ENCODE measurements at regions of chr2 and their contacts with region 1.

Region 1: DNA sequence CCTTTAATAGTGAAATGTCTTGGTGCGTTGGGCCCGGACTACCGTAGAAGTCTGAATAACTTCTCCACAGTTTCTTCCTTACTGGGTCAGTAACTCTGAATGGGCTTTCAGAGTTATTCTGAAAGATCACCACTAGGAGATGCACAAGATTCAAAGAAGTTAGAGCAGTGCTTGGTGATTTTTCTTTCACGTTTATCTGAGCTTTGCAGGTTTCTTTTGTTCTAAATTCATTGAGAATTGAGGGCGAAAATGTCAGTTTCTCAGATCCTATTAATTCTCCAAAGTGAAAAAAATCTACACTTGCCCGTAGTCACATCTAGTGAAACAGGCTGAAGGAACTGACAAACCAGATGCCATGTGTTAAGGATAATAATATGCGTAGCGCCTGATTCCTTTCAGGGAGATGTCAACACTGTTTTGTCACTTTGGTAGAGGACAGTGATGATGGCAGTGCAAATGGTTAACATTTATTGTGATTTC is 70.1 kb downstream of the QPCT start:
- DNase-seq: peak; percentile 5 to 65
- H3K4me3 ChIP-seq: no peak overlapping the region
- H3K27ac ChIP-seq: no peak overlapping the region
- H3K4me1 ChIP-seq: no peaks in the 10 kb centered on the region
- H3K27me3 ChIP-seq: no peaks in the 10 kb centered on the region
- CTCF ChIP-seq: peak; percentile 94

Region 2: GRCh38 chr2:37472959-37473358 is 58.4 kb after region 1 on chr2:
- CTCF ChIA-PET with region 1: no interaction called
- POLR2A ChIA-PET with region 1: no interaction called
- intact Hi-C with region 1: no loop called
- DNase-seq: peak; percentile 52 to 83
- H3K4me3 ChIP-seq: no peak overlapping the region
- H3K27ac ChIP-seq: peak overlapping the region; percentile 65
- H3K4me1 ChIP-seq: peaks cover 25% of the 10 kb centered on the region
- H3K27me3 ChIP-seq: no peaks in the 10 kb centered on the region
- CTCF ChIP-seq: no peak

Region 3: GRCh38 chr2:37776487-37776886 is 362.0 kb after region 1 on chr2:
- CTCF ChIA-PET with region 1: interaction called, 18 read pairs
- POLR2A ChIA-PET with region 1: no interaction called
- intact Hi-C with region 1: no loop called
- DNase-seq: peak; percentile 76 to 93
- H3K4me3 ChIP-seq: no peak overlapping the region
- H3K27ac ChIP-seq: peak overlapping the region; percentile 62
- H3K4me1 ChIP-seq: peaks cover 56% of the 10 kb centered on the region
- H3K27me3 ChIP-seq: no peaks in the 10 kb centered on the region
- CTCF ChIP-seq: no peak

Region 4: GRCh38 chr2:37921781-37922180 is 507.3 kb after region 1 on chr2:
- CTCF ChIA-PET with region 1: interaction called, 12 read pairs
- POLR2A ChIA-PET with region 1: no interaction called
- intact Hi-C with region 1: no loop called
- DNase-seq: no peak
- H3K4me3 ChIP-seq: no peak overlapping the region
- H3K27ac ChIP-seq: no peak overlapping the region
- H3K4me1 ChIP-seq: peaks cover 22% of the 10 kb centered on the region
- H3K27me3 ChIP-seq: no peaks in the 10 kb centered on the region
- CTCF ChIP-seq: no peak